ENCODE measurements at regions of chr15 and their contacts with region 1.

Region 1: GRCh38 chr15:75684642-75685041 is 28.0 kb downstream of the CSPG4 start:
- DNase-seq: no peak
- ATAC-seq: no peak
- H3K4me3 ChIP-seq: no peak overlapping the region
- H3K27ac ChIP-seq: no peak overlapping the region
- H3K4me1 ChIP-seq: no peaks in the 10 kb centered on the region
- H3K27me3 ChIP-seq: no peaks in the 10 kb centered on the region
- CTCF ChIP-seq: no peak
- POLR2A ChIP-seq: no peak

Region 2: DNA sequence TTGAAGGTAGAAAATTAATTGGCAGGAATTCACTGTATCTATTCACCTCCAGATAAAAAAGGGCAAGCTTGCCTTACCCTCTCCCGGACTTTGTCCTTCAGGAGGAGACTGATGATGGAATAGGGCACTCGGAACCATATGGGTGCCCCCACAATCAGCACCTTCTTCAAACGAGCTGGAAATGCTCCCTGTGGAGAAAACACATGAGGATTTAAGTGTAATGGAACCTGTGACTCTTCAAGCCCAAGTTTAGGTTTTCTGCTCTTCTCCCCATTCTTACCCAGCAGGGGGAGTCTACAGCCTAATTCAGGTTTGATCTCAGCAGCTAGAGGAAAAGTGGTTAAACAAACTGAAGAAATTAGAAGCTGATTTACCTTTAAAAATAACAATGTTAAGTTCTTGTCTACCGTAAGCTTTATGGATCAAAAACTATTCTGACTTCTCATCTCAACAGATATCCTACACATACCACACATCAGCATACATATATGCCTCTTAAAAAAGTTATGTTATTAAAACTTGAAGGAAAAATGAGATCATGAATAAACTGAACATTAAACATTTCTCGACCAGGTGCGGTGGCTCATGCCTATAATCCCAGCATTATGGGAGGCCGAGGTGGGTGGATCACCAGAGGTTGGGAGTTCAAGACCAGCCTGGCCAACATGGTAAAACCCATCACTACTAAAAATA is 175.7 kb before region 1 on chr15:
- in situ Hi-C with region 1: no loop called
- intact Hi-C with region 1: loop called (anchors 5 kb)
- DNase-seq: no peak
- ATAC-seq: no peak
- H3K4me3 ChIP-seq: no peak overlapping the region
- H3K27ac ChIP-seq: no peak overlapping the region
- H3K4me1 ChIP-seq: no peaks in the 10 kb centered on the region
- H3K27me3 ChIP-seq: no peaks in the 10 kb centered on the region
- CTCF ChIP-seq: peak in 4 of 5 experiments; percentile 26 to 47 (median 40)
- POLR2A ChIP-seq: no peak

Region 3: DNA sequence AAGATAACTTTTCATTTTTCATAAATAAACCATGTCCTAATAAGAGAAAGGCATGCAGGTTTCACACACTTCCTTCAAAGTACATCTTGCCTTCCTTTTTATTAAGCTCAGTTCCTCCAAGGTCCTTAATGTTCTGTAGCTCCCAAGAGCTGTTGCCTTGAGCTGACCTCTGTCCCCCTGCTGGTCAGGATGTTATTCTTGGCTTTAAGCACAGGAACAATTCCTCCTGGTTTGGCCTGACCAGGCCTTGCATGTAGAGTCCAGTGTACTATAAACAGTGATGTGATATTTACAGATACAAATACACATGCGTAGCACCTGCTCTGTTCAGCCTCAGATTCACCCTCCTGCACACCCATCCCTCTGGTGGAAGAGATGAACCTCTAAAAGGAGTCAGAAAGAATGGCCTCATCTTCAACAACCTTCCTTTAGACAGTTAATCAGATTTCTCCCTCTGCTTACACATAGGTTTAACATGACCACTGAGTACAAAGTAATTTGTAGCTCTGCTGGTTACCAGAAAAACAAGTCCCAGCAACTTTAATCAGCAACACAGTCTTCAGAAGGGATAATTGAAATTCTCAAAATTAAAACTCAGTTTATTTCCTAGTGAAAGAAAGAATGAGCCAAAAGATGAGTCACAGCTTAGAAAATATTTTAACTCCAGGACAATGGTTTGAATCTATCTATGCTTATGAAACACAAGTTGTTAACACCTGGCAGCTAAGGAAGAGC is 152.1 kb before region 1 on chr15:
- in situ Hi-C with region 1: no loop called
- intact Hi-C with region 1: no loop called
- DNase-seq: peak; percentile 52 to 77
- ATAC-seq: peak; percentile 95
- H3K4me3 ChIP-seq: no peak overlapping the region
- H3K27ac ChIP-seq: peak overlapping the region; percentile 56 to 71 (median 68)
- H3K4me1 ChIP-seq: peaks cover 31 to 32% of the 10 kb centered on the region in 2 donors
- H3K27me3 ChIP-seq: no peaks in the 10 kb centered on the region
- CTCF ChIP-seq: peak; percentile 12 to 50 (median 43)
- POLR2A ChIP-seq: no peak

Region 4: GRCh38 chr15:75723847-75724660 is 39.4 kb after region 1 on chr15:
- in situ Hi-C with region 1: no loop called
- intact Hi-C with region 1: loop called (anchors 5 kb)
- DNase-seq: peak; percentile 55 to 64
- ATAC-seq: peak in 1 of 2 donors; percentile 34
- H3K4me3 ChIP-seq: no peak overlapping the region
- H3K27ac ChIP-seq: peak overlapping the region in 3 of 4 donors; percentile 38 to 43 (median 42)
- H3K4me1 ChIP-seq: no peaks in the 10 kb centered on the region
- H3K27me3 ChIP-seq: no peaks in the 10 kb centered on the region
- CTCF ChIP-seq: no peak
- POLR2A ChIP-seq: no peak

Region 5: GRCh38 chr15:75738647-75739331 is 54.1 kb after region 1 on chr15:
- in situ Hi-C with region 1: loop called in 2 of 4 experiments (anchors 10 kb)
- intact Hi-C with region 1: no loop called
- DNase-seq: peak; percentile 76 to 91
- ATAC-seq: peak; percentile 90 to 94
- H3K4me3 ChIP-seq: peak overlapping the region; percentile 57 to 92 (median 76)
- H3K27ac ChIP-seq: peak overlapping the region in 1 of 4 donors; percentile 48
- H3K4me1 ChIP-seq: peaks cover 0 to 11% of the 10 kb centered on the region in 2 donors
- H3K27me3 ChIP-seq: no peaks in the 10 kb centered on the region
- CTCF ChIP-seq: no peak
- POLR2A ChIP-seq: peak in 1 of 2 donors; percentile 8

Measured in gastrocnemius medialis (tissue), 4 donors.